H1 (cell line): ENCODE measurements at regions of chr13 and their contacts with region 1.

Region 1: DNA sequence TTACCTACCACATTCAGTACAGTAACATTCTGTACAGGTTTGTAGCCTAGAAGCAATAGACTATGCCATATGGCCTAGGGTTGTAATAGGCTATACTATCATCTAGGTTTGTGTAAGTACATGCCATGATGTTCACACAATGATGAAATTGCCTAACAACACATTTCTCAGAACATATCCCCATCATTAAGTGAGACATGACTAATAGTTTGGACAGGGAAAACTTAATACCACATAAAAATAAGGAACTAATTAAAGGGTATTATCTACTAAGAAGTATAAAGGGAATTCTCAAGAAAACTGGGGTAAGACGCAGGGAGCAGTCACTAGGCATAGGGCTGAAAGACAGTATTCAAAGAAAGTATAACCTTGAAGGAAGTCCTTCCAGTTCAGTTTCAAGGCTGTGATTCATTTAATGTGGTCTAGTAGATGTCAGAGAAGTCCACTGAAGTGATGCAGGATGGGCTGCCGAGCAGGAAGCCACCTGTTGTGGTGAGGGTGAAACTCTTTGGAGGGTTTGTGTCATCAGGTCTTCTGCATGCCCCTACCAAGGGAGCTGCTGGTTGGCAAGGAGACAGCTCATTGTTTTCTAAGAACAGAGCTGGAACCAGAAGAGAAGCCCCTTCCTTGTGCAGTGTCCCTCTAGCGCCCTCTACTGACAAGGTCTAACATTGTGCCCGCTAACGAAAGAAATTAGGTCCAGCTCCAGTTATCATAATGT is 122.9 kb downstream of the OLFM4 start:
- DNase-seq: peak; percentile 27 to 78
- H3K4me3 ChIP-seq: no peak overlapping the region
- H3K27ac ChIP-seq: no peak overlapping the region
- H3K4me1 ChIP-seq: no peaks in the 10 kb centered on the region
- H3K27me3 ChIP-seq: no peaks in the 10 kb centered on the region
- CTCF ChIP-seq: peak; percentile 45 to 93 (median 86)
- EP300 ChIP-seq: no peak
- POLR2A ChIP-seq: no peak
- RAD21 ChIP-seq: peak; percentile 94 to 95

Region 2: GRCh38 chr13:52862358-52863206 is 288.9 kb before region 1 on chr13:
- CTCF ChIA-PET with region 1: interaction called, 18 read pairs
- POLR2A ChIA-PET with region 1: no interaction called
- DNase-seq: peak in 1 of 2 experiments; percentile 89
- H3K4me3 ChIP-seq: no peak overlapping the region
- H3K27ac ChIP-seq: no peak overlapping the region
- H3K4me1 ChIP-seq: peaks cover 0 to 4% (median 2%) of the 10 kb centered on the region in 4 experiments; a peak in 2 of 7 replicates
- H3K27me3 ChIP-seq: no peaks in the 10 kb centered on the region
- CTCF ChIP-seq: peak; percentile 22 to 80 (median 78)
- EP300 ChIP-seq: no peak
- POLR2A ChIP-seq: no peak
- RAD21 ChIP-seq: peak; percentile 65 to 75

Region 3: DNA sequence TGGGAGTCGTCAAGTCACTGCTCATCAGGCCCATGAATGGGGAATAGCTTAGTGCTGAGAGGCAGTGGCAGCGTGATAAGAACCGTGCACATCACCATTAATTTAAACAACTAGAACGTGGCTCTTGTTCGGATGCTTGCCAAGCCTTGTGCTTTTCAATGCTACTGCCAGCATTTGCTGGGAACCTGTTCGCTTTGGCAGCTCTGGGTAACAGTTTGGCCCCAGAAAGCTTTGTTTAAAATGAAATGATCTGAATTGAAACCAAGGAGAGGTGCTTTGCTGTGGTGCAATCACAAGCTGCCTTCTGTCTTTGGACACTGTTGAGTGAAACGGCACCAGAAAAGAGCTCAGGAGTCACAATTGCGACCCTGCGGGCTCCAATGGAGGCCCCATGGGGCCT is 176.3 kb before region 1 on chr13:
- CTCF ChIA-PET with region 1: interaction called, 50 read pairs
- POLR2A ChIA-PET with region 1: no interaction called
- DNase-seq: no peak
- H3K4me3 ChIP-seq: no peak overlapping the region
- H3K27ac ChIP-seq: no peak overlapping the region
- H3K4me1 ChIP-seq: no peaks in the 10 kb centered on the region
- H3K27me3 ChIP-seq: no peaks in the 10 kb centered on the region
- CTCF ChIP-seq: no peak
- EP300 ChIP-seq: no peak
- POLR2A ChIP-seq: no peak
- RAD21 ChIP-seq: no peak

Region 4: DNA sequence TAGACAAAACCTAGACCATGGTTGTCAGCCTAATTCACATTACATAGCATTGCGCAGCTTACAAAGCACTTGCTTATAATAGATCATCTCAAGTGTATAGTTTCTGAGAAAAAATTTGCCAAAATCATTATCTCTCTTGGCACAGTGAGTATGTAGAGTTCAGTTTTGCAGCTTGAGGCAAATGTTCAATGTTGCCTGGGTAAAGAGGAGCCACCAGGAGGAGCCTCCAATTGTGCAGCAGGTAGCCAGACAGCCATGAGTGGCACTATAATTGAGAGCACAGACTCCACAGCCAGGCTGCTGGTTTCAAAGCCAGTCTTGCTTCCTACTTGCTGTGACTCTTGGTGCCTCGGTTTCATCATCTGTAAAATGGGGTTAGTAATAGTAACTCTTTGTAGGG is 146.9 kb before region 1 on chr13:
- CTCF ChIA-PET with region 1: interaction called, 13 read pairs
- POLR2A ChIA-PET with region 1: no interaction called
- DNase-seq: no peak
- H3K4me3 ChIP-seq: no peak overlapping the region
- H3K27ac ChIP-seq: no peak overlapping the region
- H3K4me1 ChIP-seq: no peaks in the 10 kb centered on the region
- H3K27me3 ChIP-seq: no peaks in the 10 kb centered on the region
- CTCF ChIP-seq: peak in 2 of 3 experiments; percentile 3 to 7; a peak in 2 of 4 replicates
- EP300 ChIP-seq: no peak
- POLR2A ChIP-seq: no peak
- RAD21 ChIP-seq: peak; percentile 15 to 38; a peak in 3 of 4 replicates

Region 5: GRCh38 chr13:53137779-53138178 is 13.7 kb before region 1 on chr13:
- CTCF ChIA-PET with region 1: interaction called, 10 read pairs
- POLR2A ChIA-PET with region 1: no interaction called
- DNase-seq: no peak
- H3K4me3 ChIP-seq: no peak overlapping the region
- H3K27ac ChIP-seq: no peak overlapping the region
- H3K4me1 ChIP-seq: peaks cover 0 to 2% (median 0%) of the 10 kb centered on the region in 4 experiments; a peak in 2 of 7 replicates
- H3K27me3 ChIP-seq: no peaks in the 10 kb centered on the region
- CTCF ChIP-seq: no peak
- EP300 ChIP-seq: no peak
- POLR2A ChIP-seq: no peak
- RAD21 ChIP-seq: no peak

Region 6: DNA sequence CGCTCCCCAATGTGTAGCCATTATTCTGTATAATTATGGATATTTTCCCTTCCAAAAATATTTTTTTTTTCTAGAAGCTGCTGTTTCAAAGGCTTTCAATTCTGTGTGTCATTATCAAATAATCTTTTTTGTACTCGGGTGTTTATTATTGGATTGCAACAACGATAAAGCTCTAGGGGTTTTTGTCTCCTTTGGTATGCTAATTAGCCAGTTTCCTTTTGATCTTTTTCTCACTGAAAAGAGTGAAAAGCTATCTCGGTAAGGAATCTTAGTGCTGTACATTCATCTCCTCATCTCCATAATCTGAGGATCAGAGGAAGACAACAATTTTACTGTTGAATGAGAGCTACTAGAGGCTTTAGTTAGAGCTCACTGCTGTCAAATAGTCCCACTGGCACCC is 13.8 kb after region 1 on chr13:
- CTCF ChIA-PET with region 1: interaction called, 15 read pairs
- POLR2A ChIA-PET with region 1: no interaction called
- DNase-seq: no peak
- H3K4me3 ChIP-seq: no peak overlapping the region
- H3K27ac ChIP-seq: no peak overlapping the region
- H3K4me1 ChIP-seq: peaks cover 0 to 6% (median 0%) of the 10 kb centered on the region in 4 experiments; a peak in 1 of 7 replicates
- H3K27me3 ChIP-seq: no peaks in the 10 kb centered on the region
- CTCF ChIP-seq: no peak
- EP300 ChIP-seq: no peak
- POLR2A ChIP-seq: no peak
- RAD21 ChIP-seq: no peak

Region 7: DNA sequence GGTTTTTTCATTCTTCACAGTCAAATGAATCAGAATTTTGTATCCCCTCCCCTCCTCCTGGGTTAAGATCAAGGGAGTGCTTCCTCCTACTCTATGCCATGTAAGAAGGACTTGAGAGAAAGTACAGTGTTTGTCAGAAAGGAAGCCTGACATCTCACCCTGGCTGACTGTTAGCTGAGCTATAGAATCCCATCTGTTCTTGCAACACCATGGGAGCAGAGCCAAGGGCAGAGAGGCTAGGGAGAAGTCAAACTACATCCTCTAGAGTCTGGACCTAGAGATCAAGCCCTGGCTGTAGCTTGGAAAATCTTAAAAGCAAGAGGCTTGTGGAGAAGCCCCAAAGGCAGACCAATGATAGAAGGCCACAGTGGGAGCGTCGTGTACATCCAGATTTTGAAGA is 23.0 kb after region 1 on chr13:
- CTCF ChIA-PET with region 1: interaction called, 12 read pairs
- POLR2A ChIA-PET with region 1: no interaction called
- DNase-seq: no peak
- H3K4me3 ChIP-seq: no peak overlapping the region
- H3K27ac ChIP-seq: no peak overlapping the region
- H3K4me1 ChIP-seq: no peaks in the 10 kb centered on the region
- H3K27me3 ChIP-seq: no peaks in the 10 kb centered on the region
- CTCF ChIP-seq: no peak
- EP300 ChIP-seq: no peak
- POLR2A ChIP-seq: no peak
- RAD21 ChIP-seq: no peak

Region 8: GRCh38 chr13:53436396-53436795 is 284.9 kb after region 1 on chr13:
- CTCF ChIA-PET with region 1: no interaction called
- POLR2A ChIA-PET with region 1: no interaction called
- DNase-seq: no peak
- H3K4me3 ChIP-seq: no peak overlapping the region
- H3K27ac ChIP-seq: no peak overlapping the region
- H3K4me1 ChIP-seq: no peaks in the 10 kb centered on the region
- H3K27me3 ChIP-seq: no peaks in the 10 kb centered on the region
- CTCF ChIP-seq: no peak
- EP300 ChIP-seq: no peak
- POLR2A ChIP-seq: no peak
- RAD21 ChIP-seq: no peak